Aorta (tissue), 5 donors: ENCODE measurements at regions of chr13 and their contacts with region 1.

Region 1: DNA sequence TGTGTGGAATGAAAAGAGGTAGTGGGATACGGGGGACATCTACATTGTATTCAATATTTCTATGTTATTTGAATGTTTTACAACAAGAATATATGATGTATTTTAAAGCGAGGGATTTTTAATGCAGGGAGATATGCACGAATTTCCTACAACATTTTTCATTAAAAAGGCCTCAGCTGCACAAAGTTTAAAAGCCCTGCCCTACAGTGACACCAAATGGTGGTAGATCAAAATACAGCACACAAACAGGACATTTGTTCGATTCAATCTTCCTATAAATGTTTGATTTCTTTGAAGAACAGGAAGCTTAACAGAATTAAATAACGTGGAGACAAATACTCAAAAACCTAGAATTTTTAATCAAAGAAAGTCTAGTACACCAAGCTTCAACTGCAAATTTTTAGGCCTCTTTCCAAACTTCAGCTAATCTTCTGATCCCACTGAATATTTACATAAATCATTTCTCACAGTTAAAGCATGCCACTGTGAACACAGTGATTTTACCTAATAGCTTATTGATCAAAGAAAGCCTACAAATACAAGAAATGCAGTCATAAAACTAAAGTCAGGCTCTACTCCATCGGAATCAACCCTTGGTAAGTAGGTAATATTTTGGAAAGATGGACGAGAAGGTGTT is 257.2 kb downstream of the DIAPH3 start:
- DNase-seq: no peak
- ATAC-seq: no peak
- H3K4me3 ChIP-seq: no peak overlapping the region
- H3K27ac ChIP-seq: no peak overlapping the region
- H3K4me1 ChIP-seq: no peaks in the 10 kb centered on the region
- H3K27me3 ChIP-seq: no peaks in the 10 kb centered on the region

Region 2: GRCh38 chr13:59391696-59392095 is 514.8 kb before region 1 on chr13:
- intact Hi-C with region 1: loop called in 1 of 2 experiments (anchors 5 kb)
- DNase-seq: peak in 1 of 2 donors; percentile 49
- ATAC-seq: peak; percentile 80
- H3K4me3 ChIP-seq: no peak overlapping the region
- H3K27ac ChIP-seq: no peak overlapping the region
- H3K4me1 ChIP-seq: no peaks in the 10 kb centered on the region
- H3K27me3 ChIP-seq: no peaks in the 10 kb centered on the region

Region 3: DNA sequence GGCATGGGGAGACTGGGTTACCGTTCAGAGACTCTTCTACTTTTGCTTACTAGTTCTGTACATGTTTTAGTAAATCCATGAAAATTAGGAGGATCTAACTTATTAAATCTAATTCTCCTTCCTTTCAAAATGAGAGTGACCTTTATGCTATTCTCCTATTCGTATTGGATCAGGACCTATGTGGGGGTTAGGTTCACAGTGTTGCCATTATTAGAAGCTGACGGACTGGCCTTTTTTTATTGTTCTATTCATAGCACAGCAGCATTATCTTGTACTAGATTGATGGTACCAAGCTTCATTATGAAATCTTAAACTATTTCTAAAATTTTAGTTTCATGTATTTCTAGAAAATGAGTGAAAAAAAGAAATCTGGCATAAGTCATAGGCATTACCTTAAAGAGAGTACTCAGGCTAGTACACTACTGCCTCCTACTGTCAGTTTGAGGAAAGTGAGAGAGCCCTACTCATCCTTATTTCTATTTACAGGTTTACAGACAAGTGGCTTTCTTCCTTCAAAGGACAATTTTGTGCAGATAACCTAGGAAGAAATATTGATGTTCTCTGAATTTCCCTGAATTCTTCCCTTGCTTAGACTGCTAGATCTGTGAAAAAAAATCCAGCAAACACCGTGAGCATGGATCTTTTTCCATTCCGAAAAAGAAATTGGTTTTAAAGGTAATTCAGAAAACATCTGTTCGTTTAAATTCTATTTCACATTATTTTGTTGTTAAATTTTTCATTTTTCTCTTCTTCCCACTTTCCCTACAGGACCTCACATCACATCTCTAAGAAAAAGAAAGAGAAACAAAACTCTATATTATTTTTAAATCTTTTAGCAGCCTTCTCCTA is 228.3 kb before region 1 on chr13:
- intact Hi-C with region 1: loop called in 1 of 2 experiments (anchors 10 kb)
- DNase-seq: no peak
- ATAC-seq: no peak
- H3K4me3 ChIP-seq: no peak overlapping the region
- H3K27ac ChIP-seq: no peak overlapping the region
- H3K4me1 ChIP-seq: no peaks in the 10 kb centered on the region
- H3K27me3 ChIP-seq: no peaks in the 10 kb centered on the region

Region 4: GRCh38 chr13:59710991-59711701 is 195.4 kb before region 1 on chr13:
- intact Hi-C with region 1: no loop called
- DNase-seq: no peak
- ATAC-seq: no peak
- H3K4me3 ChIP-seq: no peak overlapping the region
- H3K27ac ChIP-seq: no peak overlapping the region
- H3K4me1 ChIP-seq: no peaks in the 10 kb centered on the region
- H3K27me3 ChIP-seq: no peaks in the 10 kb centered on the region

Region 5: GRCh38 chr13:60727140-60727539 is 820.6 kb after region 1 on chr13:
- intact Hi-C with region 1: no loop called
- DNase-seq: no peak
- ATAC-seq: no peak
- H3K4me3 ChIP-seq: no peak overlapping the region
- H3K27ac ChIP-seq: no peak overlapping the region
- H3K4me1 ChIP-seq: no peaks in the 10 kb centered on the region
- H3K27me3 ChIP-seq: no peaks in the 10 kb centered on the region